PC-3 (cell line): ENCODE measurements at regions of chr10 and their contacts with region 1.

Region 1: DNA sequence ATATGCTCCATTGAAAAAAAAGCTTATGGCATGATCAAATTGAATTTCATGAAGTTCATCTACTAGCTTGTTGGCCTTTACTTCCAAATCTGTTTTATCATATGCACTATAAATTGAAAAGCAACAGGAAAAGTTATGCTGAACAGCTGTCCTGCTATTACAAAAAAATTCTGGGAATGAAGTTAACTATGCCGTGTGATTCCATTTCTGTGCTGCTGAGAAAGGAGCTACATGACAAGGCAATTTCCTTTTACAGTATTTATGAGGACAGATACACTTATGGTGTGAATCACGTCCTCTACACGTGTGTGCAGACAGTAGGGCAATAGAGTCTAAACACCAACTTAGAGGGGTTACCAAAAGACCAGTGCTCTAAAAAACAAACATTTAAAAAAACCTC is 426.5 kb upstream of the AKR1E2 start:
- DNase-seq: no peak
- ATAC-seq: no peak
- H3K4me3 ChIP-seq: no peak overlapping the region
- H3K27ac ChIP-seq: no peak overlapping the region
- H3K4me1 ChIP-seq: no peaks in the 10 kb centered on the region
- H3K27me3 ChIP-seq: no peaks in the 10 kb centered on the region
- CTCF ChIP-seq: no peak

Region 2: DNA sequence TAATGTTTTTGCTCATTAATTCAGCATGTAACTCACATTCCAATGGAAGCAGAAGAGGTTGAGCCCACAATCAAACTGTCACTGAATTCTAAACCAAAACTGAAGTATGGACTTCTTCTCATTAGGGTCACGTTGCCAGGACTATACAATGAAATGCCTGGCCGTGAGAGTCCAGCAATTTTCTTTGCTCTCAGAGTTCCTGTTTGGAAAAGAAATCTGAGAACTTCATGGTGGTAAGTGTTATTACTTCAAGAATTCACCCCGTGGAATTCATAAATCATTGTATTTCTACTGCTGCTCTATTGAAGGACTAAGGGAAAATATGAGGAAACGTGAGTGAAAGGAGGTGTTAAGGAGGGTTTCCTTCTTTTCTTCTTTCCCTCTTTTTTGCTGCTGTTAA is 15.3 kb before region 1 on chr10:
- CTCF ChIA-PET with region 1: no interaction called
- POLR2A ChIA-PET with region 1: no interaction called
- intact Hi-C with region 1: loop called (anchors 1 kb)
- DNase-seq: no peak
- ATAC-seq: no peak
- H3K4me3 ChIP-seq: no peak overlapping the region
- H3K27ac ChIP-seq: no peak overlapping the region
- H3K4me1 ChIP-seq: no peaks in the 10 kb centered on the region
- H3K27me3 ChIP-seq: no peaks in the 10 kb centered on the region
- CTCF ChIP-seq: no peak

Region 3: DNA sequence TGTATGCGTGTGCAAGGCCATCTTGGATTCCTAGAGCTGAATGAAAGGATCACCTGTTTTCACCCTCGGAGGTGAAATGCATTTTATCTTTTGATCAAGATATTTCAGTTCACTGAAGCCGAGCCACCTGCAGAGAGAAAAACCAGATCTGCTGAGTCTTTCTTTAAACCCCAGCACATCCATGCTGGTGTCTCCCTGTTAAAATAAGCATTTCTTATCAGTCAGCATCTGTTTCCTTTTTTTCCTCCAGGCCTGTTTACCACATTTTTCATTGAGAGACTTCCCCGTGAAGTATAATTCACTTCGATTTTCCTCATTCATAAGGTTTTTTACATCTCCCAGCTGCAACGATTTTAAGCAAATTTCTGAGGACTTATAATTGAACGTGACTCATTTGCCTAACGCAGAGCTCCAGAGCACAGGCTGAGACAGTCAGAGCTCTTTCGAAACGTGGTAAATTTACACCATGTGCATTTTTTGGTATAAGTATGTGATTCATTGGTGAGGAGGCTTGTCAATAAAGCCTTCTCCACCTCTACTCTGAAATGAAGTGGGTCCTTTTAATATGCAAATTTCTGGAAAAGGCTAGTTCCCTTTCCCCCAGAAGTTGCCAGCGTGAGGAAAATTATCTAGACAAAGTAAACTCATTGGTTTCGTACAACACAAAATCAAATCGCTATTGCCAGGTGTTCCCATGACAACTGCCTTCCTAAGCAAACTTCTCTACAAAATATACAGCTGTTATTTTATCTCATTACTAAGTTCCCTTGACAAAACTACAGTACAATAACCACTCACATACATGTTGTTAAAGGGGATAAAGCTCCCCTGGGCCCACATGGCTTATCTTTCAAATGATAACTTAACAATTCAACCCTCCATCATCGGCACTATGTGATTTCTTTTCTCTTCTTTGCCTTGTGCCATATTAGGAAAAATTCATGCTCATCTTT is 51.7 kb after region 1 on chr10:
- CTCF ChIA-PET with region 1: no interaction called
- POLR2A ChIA-PET with region 1: no interaction called
- intact Hi-C with region 1: no loop called
- DNase-seq: no peak
- ATAC-seq: no peak
- H3K4me3 ChIP-seq: no peak overlapping the region
- H3K27ac ChIP-seq: no peak overlapping the region
- H3K4me1 ChIP-seq: no peaks in the 10 kb centered on the region
- H3K27me3 ChIP-seq: no peaks in the 10 kb centered on the region
- CTCF ChIP-seq: no peak